ENCODE measurements at regions of chr17 and their contacts with region 1.

Region 1: DNA sequence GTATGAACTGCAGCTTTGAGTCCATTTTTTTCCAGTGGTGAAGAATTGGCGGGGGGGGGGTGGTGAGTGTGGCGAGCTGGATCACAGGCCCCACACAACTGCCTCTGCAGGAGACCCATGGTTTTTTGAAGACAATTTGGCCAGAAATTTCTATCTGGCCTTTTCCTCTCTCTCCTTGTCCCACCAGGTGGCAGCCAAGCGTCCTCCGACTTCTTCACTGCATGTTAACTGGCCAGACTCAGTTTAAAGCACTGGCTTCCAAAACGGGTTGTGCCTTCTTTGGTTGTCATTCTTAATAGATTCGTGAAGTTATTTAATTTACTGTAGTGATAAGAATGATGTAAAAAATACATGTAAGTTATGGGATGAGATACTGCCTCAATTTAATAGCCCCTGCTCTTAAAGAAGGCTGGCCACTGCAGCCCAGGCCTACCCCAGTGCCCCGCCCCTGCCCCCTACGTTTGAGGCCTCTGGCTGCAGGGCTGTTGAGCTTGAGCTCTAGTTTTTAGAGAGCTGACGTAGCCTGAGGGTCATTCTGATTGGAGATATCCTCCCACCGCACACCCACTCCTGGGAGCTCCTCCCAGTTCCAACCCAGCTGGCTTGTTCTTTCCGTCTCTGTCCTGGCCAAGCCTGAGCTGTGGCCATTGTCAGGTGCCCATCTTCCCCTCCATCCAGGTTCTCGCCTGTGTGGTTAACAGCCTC is 36.4 kb downstream of the AKAP1 start:
- DNase-seq: peak in 1 of 5 donors; percentile 41
- ATAC-seq: peak; percentile 19 to 57 (median 47)
- H3K4me3 ChIP-seq: no peak overlapping the region
- H3K27ac ChIP-seq: peak overlapping the region in 2 of 12 donors; percentile 14 to 41
- H3K4me1 ChIP-seq: peaks cover 0 to 18% (median 0%) of the 10 kb centered on the region in 12 donors
- H3K27me3 ChIP-seq: no peaks in the 10 kb centered on the region
- CTCF ChIP-seq: peak in 11 of 12 donors; percentile 12 to 61 (median 45)
- POLR2A ChIP-seq: no peak

Region 2: DNA sequence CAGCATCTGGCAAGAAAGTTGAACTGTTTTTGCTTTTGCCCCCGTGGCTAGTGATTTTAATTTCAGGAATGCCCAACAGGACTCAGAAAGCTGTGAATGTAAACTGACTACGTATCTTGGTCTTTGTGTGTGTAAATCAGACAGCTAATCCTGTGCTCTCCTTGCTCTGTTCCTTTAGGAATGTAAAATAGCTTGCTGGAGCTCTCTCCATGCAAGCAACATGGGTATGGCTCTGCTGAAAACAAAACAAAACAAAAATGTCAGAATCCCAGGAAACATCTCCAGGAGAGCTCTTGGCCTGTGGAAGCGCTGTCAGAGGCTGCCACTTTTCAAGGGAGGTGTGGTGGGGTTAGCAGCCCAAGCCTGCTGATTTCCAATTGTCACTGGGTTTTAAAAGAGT is 689.8 kb before region 1 on chr17:
- intact Hi-C with region 1: no loop called
- DNase-seq: no peak
- ATAC-seq: no peak
- H3K4me3 ChIP-seq: no peak overlapping the region
- H3K27ac ChIP-seq: no peak overlapping the region
- H3K4me1 ChIP-seq: no peaks in the 10 kb centered on the region
- H3K27me3 ChIP-seq: peaks cover 0 to 17% (median 0%) of the 10 kb centered on the region in 9 donors
- CTCF ChIP-seq: no peak
- POLR2A ChIP-seq: no peak

Region 3: GRCh38 chr17:56939901-56940343 is 181.6 kb before region 1 on chr17:
- intact Hi-C with region 1: no loop called
- DNase-seq: no peak
- ATAC-seq: peak in 3 of 4 donors; percentile 43 to 67 (median 57)
- H3K4me3 ChIP-seq: no peak overlapping the region
- H3K27ac ChIP-seq: no peak overlapping the region
- H3K4me1 ChIP-seq: peaks cover 0 to 20% (median 0%) of the 10 kb centered on the region in 12 donors
- H3K27me3 ChIP-seq: no peaks in the 10 kb centered on the region
- CTCF ChIP-seq: peak; percentile 55 to 81 (median 70)
- POLR2A ChIP-seq: no peak

Region 4: DNA sequence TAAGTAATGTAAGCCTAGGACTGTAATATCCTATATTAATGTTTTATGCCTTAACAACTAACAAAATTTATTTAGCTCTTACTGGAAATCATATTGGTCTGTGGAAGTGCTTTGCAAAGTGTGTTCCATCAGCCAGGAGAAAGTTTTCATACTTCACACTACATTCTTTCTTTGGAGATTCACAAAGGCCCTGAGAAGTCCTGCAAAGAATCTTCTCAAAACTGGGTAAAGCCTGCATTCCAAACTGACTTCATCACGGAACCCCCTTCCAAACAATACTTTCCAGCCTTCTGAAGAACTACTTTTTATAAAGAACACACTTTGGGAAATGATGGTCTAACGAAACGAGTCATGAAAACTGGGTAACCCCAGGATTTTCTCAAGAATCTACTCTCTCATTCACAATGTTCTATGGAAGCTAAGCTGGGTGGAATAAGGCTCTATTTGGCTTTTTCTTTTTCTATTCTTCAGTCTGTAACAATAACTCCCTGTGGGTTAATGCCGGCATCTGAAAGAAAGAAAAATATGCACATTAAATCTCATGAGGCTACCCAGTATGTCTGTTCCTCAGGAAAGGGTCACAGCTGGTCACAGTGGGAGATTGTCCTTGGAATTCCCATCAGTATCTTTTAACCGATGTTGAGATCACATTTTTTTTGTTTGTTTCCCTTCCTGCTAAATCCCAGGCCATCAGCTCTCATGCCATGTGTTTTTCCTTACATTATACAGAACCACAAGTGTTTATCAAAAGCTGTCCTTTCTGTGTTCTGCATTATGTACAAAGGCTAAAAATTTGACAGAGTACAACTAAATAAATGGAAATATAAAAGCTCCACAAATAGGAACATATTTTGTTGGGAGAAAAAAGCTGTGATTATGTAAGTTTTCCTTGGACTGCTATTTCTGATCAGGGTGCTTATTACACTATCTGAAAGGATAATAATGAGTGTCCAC is 49.2 kb before region 1 on chr17:
- intact Hi-C with region 1: no loop called
- DNase-seq: no peak
- ATAC-seq: no peak
- H3K4me3 ChIP-seq: no peak overlapping the region
- H3K27ac ChIP-seq: peak overlapping the region in 1 of 12 donors; percentile 44
- H3K4me1 ChIP-seq: peaks cover 0 to 7% (median 0%) of the 10 kb centered on the region in 12 donors
- H3K27me3 ChIP-seq: no peaks in the 10 kb centered on the region
- CTCF ChIP-seq: no peak
- POLR2A ChIP-seq: no peak

Region 5: GRCh38 chr17:57662644-57663308 is 541.3 kb after region 1 on chr17:
- intact Hi-C with region 1: loop called in 1 of 10 experiments (anchors 10 kb)
- DNase-seq: peak; percentile 95 to 99 (median 97)
- ATAC-seq: peak; percentile 97 to 98 (median 98)
- H3K4me3 ChIP-seq: peak overlapping the region in 10 of 12 donors; percentile 18 to 50 (median 38)
- H3K27ac ChIP-seq: peak overlapping the region; percentile 20 to 93 (median 84)
- H3K4me1 ChIP-seq: peaks cover 2 to 47% (median 23%) of the 10 kb centered on the region in 12 donors
- H3K27me3 ChIP-seq: no peaks in the 10 kb centered on the region
- CTCF ChIP-seq: peak in 4 of 12 donors; percentile 5 to 30 (median 11)
- POLR2A ChIP-seq: peak in 1 of 2 donors; percentile 55

Region 6: GRCh38 chr17:57671667-57672632 is 550.5 kb after region 1 on chr17:
- intact Hi-C with region 1: loop called in 2 of 10 experiments (anchors 10 kb)
- DNase-seq: peak; percentile 80 to 87 (median 82)
- ATAC-seq: peak; percentile 78 to 91 (median 88)
- H3K4me3 ChIP-seq: no peak overlapping the region
- H3K27ac ChIP-seq: peak overlapping the region in 2 of 12 donors; percentile 8 to 35
- H3K4me1 ChIP-seq: peaks cover 0 to 28% (median 10%) of the 10 kb centered on the region in 12 donors
- H3K27me3 ChIP-seq: no peaks in the 10 kb centered on the region
- CTCF ChIP-seq: peak; percentile 87 to 97 (median 96)
- POLR2A ChIP-seq: no peak

Region 7: GRCh38 chr17:57747221-57748017 is 625.9 kb after region 1 on chr17:
- intact Hi-C with region 1: loop called in 2 of 10 experiments (anchors 5 kb)
- DNase-seq: no peak
- ATAC-seq: peak; percentile 37 to 62 (median 44)
- H3K4me3 ChIP-seq: no peak overlapping the region
- H3K27ac ChIP-seq: no peak overlapping the region
- H3K4me1 ChIP-seq: peaks cover 0 to 7% (median 0%) of the 10 kb centered on the region in 12 donors
- H3K27me3 ChIP-seq: peaks cover 0 to 3% (median 0%) of the 10 kb centered on the region in 9 donors
- CTCF ChIP-seq: peak; percentile 51 to 83 (median 74)
- POLR2A ChIP-seq: no peak

Region 8: DNA sequence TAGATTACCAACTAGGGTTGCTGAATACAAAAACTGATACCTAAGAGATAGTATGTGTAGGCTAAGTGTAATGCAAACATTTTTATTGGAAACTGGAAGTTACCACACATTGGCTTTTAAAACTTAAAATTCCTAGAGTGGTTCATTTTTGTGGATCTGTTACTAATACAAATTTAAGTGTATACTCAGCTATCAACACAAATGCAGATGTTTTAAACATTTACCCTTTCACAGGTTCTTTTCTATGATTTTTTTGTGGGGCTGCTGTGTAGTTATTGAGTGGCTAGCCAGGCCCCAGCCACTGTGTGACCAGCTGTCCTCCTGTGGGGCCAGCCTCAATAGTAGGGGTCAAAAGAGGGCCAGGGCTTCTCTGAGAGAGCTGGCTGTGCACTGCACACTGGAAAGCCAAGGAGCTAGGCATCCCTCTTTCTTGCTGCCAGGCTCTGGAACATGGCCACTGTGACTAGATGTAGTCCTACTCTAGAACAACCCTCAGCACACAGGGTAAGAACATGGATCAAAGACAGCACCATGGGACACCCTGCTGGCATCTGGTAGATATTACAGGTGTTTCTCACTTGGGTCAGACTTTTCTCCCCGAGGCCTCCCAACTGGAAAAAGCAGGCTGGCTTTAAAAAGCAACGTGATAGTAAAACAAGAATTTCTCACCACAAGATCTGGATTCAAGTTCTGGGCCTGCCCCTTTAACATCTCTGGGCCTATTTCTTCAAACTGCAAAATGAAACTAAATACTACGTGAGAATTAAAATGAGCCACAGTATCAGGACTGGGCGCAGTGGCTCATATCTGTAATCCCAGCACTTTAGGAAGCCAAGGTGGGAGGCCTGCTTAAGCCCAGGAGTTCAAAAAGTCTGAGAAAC is 873.8 kb after region 1 on chr17:
- intact Hi-C with region 1: loop called in 3 of 10 experiments (anchors 10 kb)
- DNase-seq: peak in 4 of 5 donors; percentile 67 to 71 (median 69)
- ATAC-seq: peak; percentile 88 to 94 (median 91)
- H3K4me3 ChIP-seq: no peak overlapping the region
- H3K27ac ChIP-seq: peak overlapping the region in 11 of 12 donors; percentile 5 to 98 (median 54)
- H3K4me1 ChIP-seq: peaks cover 0 to 53% (median 25%) of the 10 kb centered on the region in 12 donors
- H3K27me3 ChIP-seq: no peaks in the 10 kb centered on the region
- CTCF ChIP-seq: peak; percentile 46 to 72 (median 68)
- POLR2A ChIP-seq: no peak

Region 9: GRCh38 chr17:58006924-58007780 is 885.7 kb after region 1 on chr17 and contains the start of gene SRSF1:
- intact Hi-C with region 1: loop called in 1 of 10 experiments (anchors 10 kb)
- DNase-seq: peak; percentile 98 to 99 (median 98)
- ATAC-seq: peak; percentile 95 to 98 (median 96)
- H3K4me3 ChIP-seq: peak within 1 kb of the TSS; percentile 68 to 96 (median 78)
- H3K27ac ChIP-seq: peak within 1 kb of the TSS; percentile 92 to 99 (median 96)
- H3K4me1 ChIP-seq: peaks cover 16 to 49% (median 38%) of the 10 kb centered on the region in 12 donors
- H3K27me3 ChIP-seq: no peaks in the 10 kb centered on the region
- CTCF ChIP-seq: no peak
- POLR2A ChIP-seq: peak; percentile 74 to 92
- total RNA-seq, gene SRSF1: 80.8 to 114 (median 99.7) TPM